GM10248 (cell line): ENCODE measurements at regions of chr11 and their contacts with region 1.

Region 1: DNA sequence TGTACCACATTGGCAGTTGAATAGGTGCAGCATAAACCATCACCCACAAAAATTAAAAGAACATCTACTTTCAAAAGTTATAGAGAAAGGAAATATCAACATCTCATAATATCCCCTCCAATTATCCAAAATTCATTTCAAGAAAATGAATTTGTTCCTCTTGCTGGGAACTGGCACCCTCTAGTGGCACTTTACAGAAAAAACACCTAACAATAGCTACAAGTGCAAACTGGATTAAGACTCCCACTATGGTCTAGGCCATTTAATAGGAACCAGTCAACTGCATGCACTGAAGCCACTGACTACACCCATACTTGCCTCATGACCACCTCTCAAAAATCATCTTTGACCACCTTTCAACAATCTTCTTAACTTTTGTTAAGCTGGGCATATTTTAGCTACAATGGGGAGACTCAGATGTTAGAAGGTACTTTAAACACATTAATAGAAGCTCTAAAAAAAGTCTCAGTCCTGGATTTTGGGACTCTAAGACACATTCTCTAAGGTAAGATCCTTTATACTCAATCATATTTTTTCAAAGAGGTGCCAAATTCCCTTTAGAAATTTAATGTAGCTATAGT is 17.3 kb downstream of the TRAF6 start:
- DNase-seq: peak; percentile 45
- CTCF ChIP-seq: peak; percentile 69

Region 2: GRCh38 chr11:35969089-35970042 is 523.4 kb before region 1 on chr11:
- CTCF ChIA-PET with region 1: no interaction called
- POLR2A ChIA-PET with region 1: no interaction called
- DNase-seq: peak; percentile 20
- CTCF ChIP-seq: no peak

Region 3: DNA sequence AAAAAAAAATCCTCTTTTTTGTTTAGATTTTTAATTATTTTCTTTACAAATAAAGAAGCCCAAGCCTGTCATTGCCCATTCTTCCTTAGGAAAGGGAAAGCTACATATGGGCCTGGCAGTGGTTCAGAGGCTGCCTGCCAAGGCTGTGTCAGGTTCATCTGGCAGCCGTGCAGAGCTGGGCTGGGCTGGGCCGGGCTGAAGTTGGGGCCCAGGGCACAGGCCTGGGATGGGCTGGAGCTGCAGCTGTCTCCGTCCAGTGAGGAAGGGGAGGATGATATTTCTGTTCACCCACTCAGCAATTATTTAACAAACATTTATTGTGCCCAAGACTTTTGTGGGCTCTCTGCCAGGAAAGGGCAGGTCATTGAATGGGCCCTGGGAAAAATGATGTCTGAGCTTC is 192.2 kb before region 1 on chr11:
- CTCF ChIA-PET with region 1: interaction called, 185 read pairs
- POLR2A ChIA-PET with region 1: no interaction called
- DNase-seq: no peak
- CTCF ChIP-seq: no peak

Region 4: DNA sequence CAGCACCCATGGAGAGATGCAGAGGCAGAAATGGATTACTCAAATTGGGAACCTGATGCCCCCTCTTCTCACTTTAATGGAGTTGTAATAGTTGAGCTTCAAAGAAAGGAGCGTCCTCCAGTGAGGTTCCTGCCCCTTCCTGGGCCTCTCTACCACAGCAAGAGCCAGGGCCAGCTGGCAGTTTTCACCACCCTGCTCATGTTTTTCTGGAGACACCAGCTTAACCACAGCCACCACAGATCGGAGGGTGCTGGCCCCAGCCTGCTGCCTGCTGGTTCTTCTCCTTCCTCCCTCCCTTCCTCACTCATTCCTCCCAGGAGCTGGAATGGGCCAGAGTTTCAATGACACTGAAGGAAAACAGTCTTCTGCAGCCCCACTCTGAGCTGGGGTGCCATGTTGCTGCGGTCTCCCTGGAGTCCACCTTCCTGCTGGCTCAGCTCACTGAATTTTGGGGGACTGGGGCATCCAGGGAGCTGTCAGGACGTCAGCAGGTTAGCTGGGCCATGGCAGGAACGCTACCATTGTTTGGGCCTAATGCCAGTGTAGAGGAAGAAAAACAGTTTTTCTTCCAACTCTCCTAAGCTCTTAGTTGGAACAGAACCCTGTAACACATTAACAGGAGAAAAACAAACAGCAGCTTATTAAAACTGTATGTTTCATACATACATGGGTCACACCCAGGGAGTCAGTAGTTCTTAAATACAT is 40.4 kb before region 1 on chr11:
- CTCF ChIA-PET with region 1: interaction called, 16 read pairs
- POLR2A ChIA-PET with region 1: no interaction called
- DNase-seq: no peak
- CTCF ChIP-seq: no peak

Region 5: GRCh38 chr11:36509694-36510566 is 17.1 kb after region 1 on chr11 and contains the start of gene TRAF6:
- CTCF ChIA-PET with region 1: interaction called, 97 read pairs
- POLR2A ChIA-PET with region 1: no interaction called
- DNase-seq: peak; percentile 94
- CTCF ChIP-seq: peak; percentile 92

Region 6: DNA sequence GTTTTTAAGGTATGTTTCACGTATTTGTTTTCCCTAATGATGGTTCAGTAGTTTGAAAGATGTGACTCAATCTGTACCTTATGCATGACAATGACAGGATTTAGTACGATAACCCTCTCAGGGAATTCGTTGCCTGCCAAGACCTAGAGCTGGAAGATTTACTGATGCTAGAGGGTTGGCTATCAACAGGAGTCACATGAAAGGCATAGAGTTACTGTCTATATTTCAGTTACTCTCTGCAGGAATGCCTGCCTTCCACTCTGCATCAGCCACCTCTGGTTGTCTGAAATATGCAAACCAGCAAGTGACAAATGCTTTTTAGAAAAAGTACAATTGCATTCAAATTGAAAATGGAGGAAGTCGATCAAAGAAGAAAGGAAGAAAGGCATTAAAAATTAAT is 381.5 kb after region 1 on chr11:
- CTCF ChIA-PET with region 1: no interaction called
- POLR2A ChIA-PET with region 1: no interaction called
- DNase-seq: no peak
- CTCF ChIP-seq: no peak